ENCODE measurements at regions of chr20 and their contacts with region 1.

Region 1: DNA sequence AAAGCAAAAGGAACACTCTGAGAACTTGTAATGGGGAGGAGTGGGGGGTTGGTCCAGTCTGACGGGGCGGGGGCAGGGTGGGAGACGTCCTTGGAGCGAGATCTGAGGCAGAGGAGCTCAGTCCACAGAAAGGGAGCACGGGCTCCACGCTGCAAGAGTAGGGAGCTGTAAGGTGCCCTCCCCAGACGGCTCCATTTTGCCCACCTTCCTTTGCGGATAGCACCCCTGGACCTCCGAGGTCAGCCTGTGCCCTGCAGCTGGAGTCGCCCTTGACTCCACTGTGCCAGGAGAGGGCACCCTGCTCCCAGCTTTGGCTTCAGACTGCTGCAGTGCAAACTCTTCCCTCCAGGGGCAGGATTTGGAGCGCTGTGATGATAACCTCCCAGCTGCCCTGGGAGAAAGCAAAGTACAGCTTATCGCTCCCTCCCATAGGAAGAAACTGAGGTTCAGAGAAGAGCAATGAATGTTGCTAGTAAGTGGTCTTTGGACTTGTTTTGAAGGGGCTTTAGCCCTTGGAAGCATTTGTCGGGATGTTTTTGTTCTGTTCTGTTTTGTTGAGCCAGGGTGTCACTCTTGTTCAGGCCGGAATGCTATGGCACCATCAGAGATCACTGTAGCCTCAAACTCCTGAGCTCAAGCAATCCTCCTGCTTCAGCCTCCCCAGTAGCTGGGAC is 9.5 kb upstream of the AHCY start:
- DNase-seq: peak; percentile 97 to 99
- H3K4me3 ChIP-seq: peak overlapping the region; percentile 53
- H3K4me3 Mint-ChIP-seq: peak overlapping the region; percentile 77
- H3K27ac Mint-ChIP-seq: peak overlapping the region; percentile 79
- H3K4me1 ChIP-seq: peaks cover 34% of the 10 kb centered on the region
- H3K4me1 Mint-ChIP-seq: peaks cover 16% of the 10 kb centered on the region
- H3K27me3 ChIP-seq: no peaks in the 10 kb centered on the region
- H3K27me3 Mint-ChIP-seq: no peaks in the 10 kb centered on the region
- CTCF ChIP-seq: peak; percentile 100

Region 2: GRCh38 chr20:34190679-34191090 is 122.0 kb before region 1 on chr20:
- CTCF ChIA-PET with region 1: interaction called, 54 read pairs
- POLR2A ChIA-PET with region 1: no interaction called
- intact Hi-C with region 1: loop called (anchors 1 kb)
- DNase-seq: peak; percentile 88 to 89
- H3K4me3 ChIP-seq: no peak overlapping the region
- H3K4me3 Mint-ChIP-seq: no peak overlapping the region
- H3K27ac Mint-ChIP-seq: no peak overlapping the region
- H3K4me1 ChIP-seq: no peaks in the 10 kb centered on the region
- H3K4me1 Mint-ChIP-seq: no peaks in the 10 kb centered on the region
- H3K27me3 ChIP-seq: no peaks in the 10 kb centered on the region; the same call in 1 of the 2 replicates
- H3K27me3 Mint-ChIP-seq: peaks cover 9% of the 10 kb centered on the region
- CTCF ChIP-seq: peak; percentile 97 to 99

Region 3: GRCh38 chr20:34334654-34335407 is 22.1 kb after region 1 on chr20:
- CTCF ChIA-PET with region 1: interaction called, 58 read pairs
- POLR2A ChIA-PET with region 1: no interaction called
- intact Hi-C with region 1: no loop called
- DNase-seq: no peak
- H3K4me3 ChIP-seq: no peak overlapping the region
- H3K4me3 Mint-ChIP-seq: no peak overlapping the region
- H3K27ac Mint-ChIP-seq: peak overlapping the region; percentile 56
- H3K4me1 ChIP-seq: peaks cover 19% of the 10 kb centered on the region
- H3K4me1 Mint-ChIP-seq: peaks cover 25% of the 10 kb centered on the region
- H3K27me3 ChIP-seq: no peaks in the 10 kb centered on the region
- H3K27me3 Mint-ChIP-seq: no peaks in the 10 kb centered on the region
- CTCF ChIP-seq: no peak

Region 4: GRCh38 chr20:34389206-34389953 is 76.7 kb after region 1 on chr20:
- CTCF ChIA-PET with region 1: interaction called, 15 read pairs
- POLR2A ChIA-PET with region 1: no interaction called
- intact Hi-C with region 1: loop called (anchors 5 kb)
- DNase-seq: peak; percentile 36 to 67
- H3K4me3 ChIP-seq: no peak overlapping the region
- H3K4me3 Mint-ChIP-seq: no peak overlapping the region
- H3K27ac Mint-ChIP-seq: peak overlapping the region; percentile 43
- H3K4me1 ChIP-seq: peaks cover 49% of the 10 kb centered on the region
- H3K4me1 Mint-ChIP-seq: peaks cover 47% of the 10 kb centered on the region
- H3K27me3 ChIP-seq: no peaks in the 10 kb centered on the region
- H3K27me3 Mint-ChIP-seq: no peaks in the 10 kb centered on the region
- CTCF ChIP-seq: no peak

Region 5: DNA sequence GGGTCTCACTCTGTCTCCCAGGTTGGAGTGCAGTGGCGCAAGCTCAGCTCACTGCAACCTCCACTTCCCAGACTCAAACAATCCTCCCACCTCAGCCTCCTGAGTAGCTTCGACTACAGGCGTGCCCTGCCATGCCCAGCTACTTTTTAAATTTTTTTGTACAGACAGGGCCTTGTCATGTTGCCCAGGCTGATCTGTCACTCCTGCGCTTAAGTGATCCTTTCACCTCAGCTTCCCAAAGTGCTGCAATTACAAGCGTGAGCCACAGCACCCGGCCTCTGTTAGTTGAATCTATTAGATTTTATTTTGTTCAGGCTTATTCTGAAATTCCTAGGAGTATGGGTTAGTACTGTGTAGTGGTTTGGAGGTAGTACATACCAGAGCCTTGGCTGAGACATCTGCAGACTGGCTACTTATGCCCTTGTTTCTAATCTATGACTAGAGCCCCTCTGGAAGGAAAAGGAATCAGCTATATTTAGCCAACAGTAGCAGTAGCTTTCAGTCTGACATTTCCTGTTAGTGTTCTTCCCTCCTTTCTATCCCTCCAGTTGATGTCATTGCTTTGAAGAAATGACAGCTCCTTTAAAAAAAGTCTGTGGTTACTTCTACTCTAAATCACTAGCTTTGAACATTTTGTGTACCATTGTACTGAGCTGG is 124.8 kb after region 1 on chr20:
- CTCF ChIA-PET with region 1: interaction called, 17 read pairs
- POLR2A ChIA-PET with region 1: no interaction called
- intact Hi-C with region 1: no loop called
- DNase-seq: no peak
- H3K4me3 ChIP-seq: no peak overlapping the region
- H3K4me3 Mint-ChIP-seq: no peak overlapping the region
- H3K27ac Mint-ChIP-seq: no peak overlapping the region
- H3K4me1 ChIP-seq: no peaks in the 10 kb centered on the region
- H3K4me1 Mint-ChIP-seq: peaks cover 6% of the 10 kb centered on the region
- H3K27me3 ChIP-seq: no peaks in the 10 kb centered on the region
- H3K27me3 Mint-ChIP-seq: no peaks in the 10 kb centered on the region
- CTCF ChIP-seq: no peak

Region 6: GRCh38 chr20:34516247-34517113 is 203.8 kb after region 1 on chr20 and contains the start of gene DYNLRB1:
- CTCF ChIA-PET with region 1: interaction called, 130 read pairs
- POLR2A ChIA-PET with region 1: interaction called, 11 read pairs
- intact Hi-C with region 1: loop called (anchors 1 kb)
- DNase-seq: peak; percentile 100
- H3K4me3 ChIP-seq: peak within 1 kb of the TSS; percentile 52
- H3K4me3 Mint-ChIP-seq: peak within 1 kb of the TSS; percentile 85
- H3K27ac Mint-ChIP-seq: peak within 1 kb of the TSS; percentile 91
- H3K4me1 ChIP-seq: peaks cover 6% of the 10 kb centered on the region
- H3K4me1 Mint-ChIP-seq: peaks cover 19% of the 10 kb centered on the region
- H3K27me3 ChIP-seq: no peaks in the 10 kb centered on the region
- H3K27me3 Mint-ChIP-seq: no peaks in the 10 kb centered on the region
- CTCF ChIP-seq: no peak
- total RNA-seq, gene DYNLRB1: 357 and 359 TPM in 2 replicates

Region 7: DNA sequence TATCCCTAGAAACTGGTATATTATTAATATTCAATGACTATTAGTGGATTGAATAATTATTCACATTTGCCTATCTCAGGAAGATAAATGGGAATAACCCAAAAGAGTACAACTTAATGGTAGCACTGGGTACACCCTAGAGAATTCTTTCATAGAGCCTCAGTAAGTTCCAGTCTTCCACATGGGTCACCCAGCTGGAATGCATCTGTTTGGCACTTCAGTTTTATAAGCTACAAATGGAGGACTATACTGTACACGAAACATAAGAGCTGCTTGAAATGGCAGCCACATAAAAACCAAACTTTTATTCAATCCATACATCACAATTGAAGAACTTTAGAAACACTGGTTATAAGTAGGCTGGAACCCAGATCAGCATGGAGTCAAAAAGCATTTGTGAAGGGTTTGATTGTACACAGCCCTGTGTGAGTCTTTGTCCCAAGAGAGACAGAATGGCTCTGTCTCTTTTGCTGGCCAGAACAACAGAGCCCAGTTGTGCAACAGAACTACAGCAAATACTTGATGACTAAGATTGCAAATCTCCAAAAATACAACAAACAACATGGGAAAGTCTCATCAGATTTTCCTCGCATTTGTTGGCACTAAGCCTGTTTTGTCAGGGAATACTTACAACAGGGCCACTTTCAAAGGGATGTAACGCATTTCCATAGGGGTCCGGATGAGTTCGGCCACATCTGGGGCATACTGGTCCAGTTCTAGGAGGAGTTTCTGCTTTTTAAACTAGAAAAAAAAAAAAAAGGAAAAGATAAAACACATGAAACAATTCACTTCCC is 324.8 kb after region 1 on chr20:
- CTCF ChIA-PET with region 1: no interaction called
- POLR2A ChIA-PET with region 1: no interaction called
- intact Hi-C with region 1: no loop called
- DNase-seq: no peak
- H3K4me3 ChIP-seq: no peak overlapping the region
- H3K4me3 Mint-ChIP-seq: no peak overlapping the region
- H3K27ac Mint-ChIP-seq: no peak overlapping the region
- H3K4me1 ChIP-seq: peaks cover 24% of the 10 kb centered on the region
- H3K4me1 Mint-ChIP-seq: peaks cover 24% of the 10 kb centered on the region
- H3K27me3 ChIP-seq: no peaks in the 10 kb centered on the region
- H3K27me3 Mint-ChIP-seq: no peaks in the 10 kb centered on the region
- CTCF ChIP-seq: no peak

Region 8: GRCh38 chr20:34768096-34768495 is 455.4 kb after region 1 on chr20:
- CTCF ChIA-PET with region 1: interaction called, 27 read pairs
- POLR2A ChIA-PET with region 1: no interaction called
- intact Hi-C with region 1: no loop called
- DNase-seq: no peak
- H3K4me3 ChIP-seq: no peak overlapping the region
- H3K4me3 Mint-ChIP-seq: no peak overlapping the region
- H3K27ac Mint-ChIP-seq: no peak overlapping the region
- H3K4me1 ChIP-seq: 0 out of 2 replicates have a peak, but pooled peaks cover 4% of the 10 kb centered on the region
- H3K4me1 Mint-ChIP-seq: peaks cover 7% of the 10 kb centered on the region
- H3K27me3 ChIP-seq: no peaks in the 10 kb centered on the region
- H3K27me3 Mint-ChIP-seq: no peaks in the 10 kb centered on the region
- CTCF ChIP-seq: no peak